GM12878 (cell line): ENCODE measurements at regions of chr10 and their contacts with region 1.

Region 1: GRCh38 chr10:128859738-128860386 is 607.2 kb upstream of the MGMT start:
- DNase-seq: no peak
- ATAC-seq: peak; percentile 52; the same call in 1 of the 3 replicates
- H3K4me3 ChIP-seq: no peak overlapping the region
- H3K27ac ChIP-seq: no peak overlapping the region
- H3K4me1 ChIP-seq: no peaks in the 10 kb centered on the region
- H3K27me3 ChIP-seq: peaks cover 0 to 3% of the 10 kb centered on the region in 2 experiments; a peak in 1 of 4 replicates
- CTCF ChIP-seq: peak; percentile 44 to 56 (median 51); a peak in 5 of 6 replicates
- EP300 ChIP-seq: no peak
- POLR2A ChIP-seq: no peak
- RAD21 ChIP-seq: peak; percentile 51

Region 2: DNA sequence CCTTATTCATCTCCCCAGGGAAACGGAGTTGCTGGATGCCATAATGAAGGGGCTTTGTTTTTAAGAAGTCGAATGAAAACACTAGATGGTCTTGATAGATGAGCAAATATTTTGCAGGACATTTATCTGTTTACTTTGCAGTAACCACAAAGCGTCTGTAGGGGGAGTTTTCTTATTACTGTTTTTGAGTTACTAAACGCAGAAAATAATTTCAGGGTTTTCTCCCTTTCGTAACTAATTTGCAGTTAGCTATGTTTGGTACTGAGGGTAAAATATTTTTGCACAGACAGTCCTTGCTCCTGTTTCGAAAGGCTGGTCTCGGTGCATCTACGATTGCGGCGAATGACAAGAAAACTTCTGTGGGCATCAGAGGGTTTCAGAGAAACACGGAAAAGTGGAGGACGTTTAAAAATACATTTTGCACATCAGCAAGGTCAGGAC is 228.0 kb before region 1 on chr10:
- CTCF ChIA-PET with region 1: no interaction called
- POLR2A ChIA-PET with region 1: no interaction called
- RAD21 ChIA-PET with region 1: no interaction called
- SMC1A ChIA-PET with region 1: no interaction called
- in situ Hi-C with region 1: no loop called
- intact Hi-C with region 1: loop called (anchors 5 kb)
- DNase-seq: no peak
- ATAC-seq: no peak
- H3K4me3 ChIP-seq: no peak overlapping the region
- H3K27ac ChIP-seq: no peak overlapping the region
- H3K4me1 ChIP-seq: no peaks in the 10 kb centered on the region
- H3K27me3 ChIP-seq: peaks cover 0 to 1% of the 10 kb centered on the region in 2 experiments; a peak in 1 of 4 replicates
- CTCF ChIP-seq: peak; percentile 40 to 57 (median 48)
- EP300 ChIP-seq: no peak
- POLR2A ChIP-seq: no peak
- RAD21 ChIP-seq: peak; percentile 19; the same call in 1 of the 2 replicates

Region 3: DNA sequence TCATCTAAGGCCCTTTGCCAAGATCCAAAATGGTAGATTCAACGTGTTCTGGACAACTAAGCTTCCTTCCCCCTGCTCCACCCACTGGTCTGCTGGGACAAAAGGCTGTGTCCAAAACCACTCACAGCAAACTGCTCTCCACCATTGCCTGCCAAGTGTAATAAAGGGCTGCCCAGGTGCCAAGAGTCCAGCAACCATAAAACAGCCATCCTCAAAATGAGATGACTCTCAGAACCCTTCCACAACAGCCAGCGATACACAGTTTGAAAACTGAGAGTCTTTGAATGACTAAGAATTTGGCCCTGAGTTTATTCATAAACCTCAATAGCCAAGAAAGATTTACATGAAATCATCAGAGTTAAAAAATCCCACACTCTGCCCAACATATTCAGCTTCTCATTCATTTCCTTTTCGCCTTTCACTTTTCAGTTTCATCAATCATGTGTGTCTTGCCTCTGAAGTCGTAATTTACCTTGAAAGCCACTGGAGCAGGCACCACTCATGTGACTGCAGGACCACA is 50.9 kb before region 1 on chr10:
- CTCF ChIA-PET with region 1: no interaction called
- POLR2A ChIA-PET with region 1: no interaction called
- RAD21 ChIA-PET with region 1: no interaction called
- SMC1A ChIA-PET with region 1: no interaction called
- in situ Hi-C with region 1: no loop called
- intact Hi-C with region 1: no loop called
- DNase-seq: no peak
- ATAC-seq: no peak
- H3K4me3 ChIP-seq: no peak overlapping the region
- H3K27ac ChIP-seq: no peak overlapping the region
- H3K4me1 ChIP-seq: no peaks in the 10 kb centered on the region
- H3K27me3 ChIP-seq: no peaks in the 10 kb centered on the region
- CTCF ChIP-seq: no peak
- EP300 ChIP-seq: no peak
- POLR2A ChIP-seq: no peak
- RAD21 ChIP-seq: no peak